PC-3 (cell line): ENCODE measurements at regions of chr2 and their contacts with region 1.

Region 1: GRCh38 chr2:95314964-95315611 is 17.9 kb downstream of the KCNIP3 start:
- DNase-seq: peak; percentile 80
- ATAC-seq: peak; percentile 59
- H3K4me3 ChIP-seq: peak overlapping the region; percentile 18; the same call in 1 of the 2 replicates
- H3K27ac ChIP-seq: peak overlapping the region; percentile 80
- H3K4me1 ChIP-seq: peaks cover 60% of the 10 kb centered on the region
- H3K27me3 ChIP-seq: no peaks in the 10 kb centered on the region
- CTCF ChIP-seq: peak; percentile 91

Region 2: GRCh38 chr2:95231723-95232122 is 83.4 kb before region 1 on chr2:
- CTCF ChIA-PET with region 1: interaction called, 28 read pairs
- POLR2A ChIA-PET with region 1: no interaction called
- intact Hi-C with region 1: loop called (anchors 1 kb)
- DNase-seq: peak; percentile 93
- ATAC-seq: peak; percentile 85
- H3K4me3 ChIP-seq: no peak overlapping the region
- H3K27ac ChIP-seq: no peak overlapping the region
- H3K4me1 ChIP-seq: peaks cover 10% of the 10 kb centered on the region
- H3K27me3 ChIP-seq: no peaks in the 10 kb centered on the region
- CTCF ChIP-seq: peak; percentile 96

Region 3: GRCh38 chr2:95278051-95278471 is 37.0 kb before region 1 on chr2:
- CTCF ChIA-PET with region 1: interaction called, 4 read pairs
- POLR2A ChIA-PET with region 1: no interaction called
- intact Hi-C with region 1: loop called (anchors 1 kb)
- DNase-seq: peak; percentile 94
- ATAC-seq: peak; percentile 82
- H3K4me3 ChIP-seq: peak overlapping the region; percentile 36
- H3K27ac ChIP-seq: peak overlapping the region; percentile 81
- H3K4me1 ChIP-seq: peaks cover 53% of the 10 kb centered on the region
- H3K27me3 ChIP-seq: no peaks in the 10 kb centered on the region
- CTCF ChIP-seq: no peak